ENCODE measurements at regions of chrX and their contacts with region 1.

Region 1: DNA sequence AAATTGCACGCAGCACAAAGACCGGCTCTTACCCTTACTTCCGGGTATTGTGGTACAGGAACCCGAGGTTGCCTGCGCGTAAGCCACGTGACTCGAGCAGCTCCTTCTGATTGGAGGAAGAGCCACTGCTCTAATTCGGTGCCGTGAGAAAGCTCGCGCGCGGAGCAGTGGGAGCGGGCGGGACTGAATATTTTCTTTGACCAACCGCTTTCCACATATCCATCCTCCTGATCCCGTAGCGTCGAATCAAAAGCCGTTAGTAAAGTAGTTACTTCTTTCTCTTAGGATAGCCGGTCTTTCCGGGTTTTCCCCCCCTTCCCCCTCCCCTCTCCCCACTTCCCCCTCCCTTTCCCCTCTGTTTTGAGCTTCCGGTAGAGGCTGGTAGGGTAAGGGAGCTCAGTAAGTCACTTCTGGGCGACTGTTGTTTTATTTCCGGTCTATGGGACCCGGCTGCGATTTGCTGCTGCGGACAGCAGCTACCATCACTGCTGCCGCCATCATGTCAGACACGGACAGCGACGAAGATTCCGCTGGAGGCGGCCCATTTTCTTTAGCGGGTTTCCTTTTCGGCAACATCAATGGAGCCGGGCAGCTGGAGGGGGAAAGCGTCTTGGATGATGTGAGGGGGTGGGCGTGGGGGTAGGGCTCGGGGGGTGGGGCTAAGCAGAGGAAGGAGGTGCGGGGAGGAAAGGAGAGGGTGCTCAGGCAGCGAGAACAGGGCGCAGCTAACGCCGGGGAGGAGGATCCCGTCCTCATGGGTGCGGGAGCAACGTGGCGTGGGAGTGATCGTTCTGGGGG is at the start of gene TAF1:
- DNase-seq: peak; percentile 91 to 97
- H3K4me3 ChIP-seq: peak within 1 kb of the TSS; percentile 92
- H3K27ac ChIP-seq: peak within 1 kb of the TSS; percentile 94
- H3K4me1 ChIP-seq: peaks cover 15% of the 10 kb centered on the region
- H3K27me3 ChIP-seq: no peaks in the 10 kb centered on the region
- CTCF ChIP-seq: no peak
- total RNA-seq, gene TAF1: 45.9 and 49.6 TPM in 2 replicates

Region 2: GRCh38 chrX:71254092-71254941 is 111.8 kb before region 1 on chrX and contains the start of gene ZMYM3:
- CTCF ChIA-PET with region 1: interaction called, 4 read pairs
- POLR2A ChIA-PET with region 1: interaction called, 5 read pairs
- intact Hi-C with region 1: loop called (anchors 1 kb)
- DNase-seq: peak; percentile 72 to 87
- H3K4me3 ChIP-seq: peak within 1 kb of the TSS; percentile 87
- H3K27ac ChIP-seq: no peak within 1 kb of the TSS
- H3K4me1 ChIP-seq: peaks cover 12% of the 10 kb centered on the region
- H3K27me3 ChIP-seq: no peaks in the 10 kb centered on the region
- CTCF ChIP-seq: no peak
- total RNA-seq, gene ZMYM3: 45.3 and 45.7 TPM in 2 replicates

Region 3: DNA sequence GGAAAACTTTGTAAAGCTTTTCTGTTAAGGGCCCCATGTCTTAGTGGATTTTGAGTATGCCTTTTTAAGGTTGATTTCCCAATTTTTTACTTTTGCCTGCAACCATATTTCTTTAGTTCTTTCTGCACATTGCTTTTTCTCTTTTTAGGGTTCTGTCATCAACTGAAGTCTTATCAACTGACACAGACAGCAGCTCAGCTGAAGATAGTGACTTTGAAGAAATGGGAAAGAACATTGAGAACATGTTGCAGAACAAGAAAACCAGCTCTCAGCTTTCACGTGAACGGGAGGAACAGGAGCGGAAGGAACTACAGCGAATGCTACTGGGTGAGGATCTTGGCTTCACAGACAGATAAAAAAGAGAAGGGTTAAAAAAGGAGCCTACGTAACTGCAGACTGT is 27.8 kb after region 1 on chrX:
- CTCF ChIA-PET with region 1: no interaction called
- POLR2A ChIA-PET with region 1: interaction called, 14 read pairs
- intact Hi-C with region 1: no loop called
- DNase-seq: no peak
- H3K4me3 ChIP-seq: no peak overlapping the region
- H3K27ac ChIP-seq: no peak overlapping the region
- H3K4me1 ChIP-seq: no peaks in the 10 kb centered on the region
- H3K27me3 ChIP-seq: no peaks in the 10 kb centered on the region
- CTCF ChIP-seq: no peak